ENCODE measurements at regions of chr16 and their contacts with region 1.

Region 1: GRCh38 chr16:77359065-77359502 is 75.8 kb downstream of the ADAMTS18 start:
- DNase-seq: no peak
- ATAC-seq: no peak
- H3K4me3 ChIP-seq: no peak overlapping the region
- H3K27ac ChIP-seq: no peak overlapping the region
- H3K4me1 ChIP-seq: no peaks in the 10 kb centered on the region
- H3K27me3 ChIP-seq: peaks cover 39% of the 10 kb centered on the region
- CTCF ChIP-seq: no peak
- POLR2A ChIP-seq: no peak
- RAD21 ChIP-seq: no peak

Region 2: DNA sequence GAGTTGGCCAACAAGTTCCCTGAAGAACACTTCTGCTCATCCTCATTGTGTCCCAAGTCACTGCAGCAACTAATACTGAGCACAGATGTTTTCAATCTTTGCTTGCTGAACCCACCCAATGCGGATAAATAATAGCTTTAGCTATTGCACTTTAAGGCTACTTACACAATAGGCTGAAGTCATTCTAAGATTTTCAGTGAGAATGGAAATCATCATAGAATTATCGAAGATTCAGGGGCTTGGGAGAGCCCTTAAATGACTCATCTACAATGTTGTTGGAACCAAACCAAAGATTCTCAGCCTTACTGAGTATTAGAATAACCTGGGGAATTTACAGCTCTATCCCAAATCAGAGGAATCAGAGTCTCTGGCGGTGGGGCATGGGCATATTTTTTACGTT is 108.7 kb before region 1 on chr16:
- CTCF ChIA-PET with region 1: no interaction called
- POLR2A ChIA-PET with region 1: no interaction called
- RAD21 ChIA-PET with region 1: no interaction called
- intact Hi-C with region 1: loop called (anchors 5 kb)
- DNase-seq: no peak
- ATAC-seq: no peak
- H3K4me3 ChIP-seq: no peak overlapping the region
- H3K27ac ChIP-seq: no peak overlapping the region
- H3K4me1 ChIP-seq: no peaks in the 10 kb centered on the region
- H3K27me3 ChIP-seq: peaks cover 16% of the 10 kb centered on the region; the same call in 1 of the 2 replicates
- CTCF ChIP-seq: no peak
- POLR2A ChIP-seq: no peak
- RAD21 ChIP-seq: no peak

Region 3: DNA sequence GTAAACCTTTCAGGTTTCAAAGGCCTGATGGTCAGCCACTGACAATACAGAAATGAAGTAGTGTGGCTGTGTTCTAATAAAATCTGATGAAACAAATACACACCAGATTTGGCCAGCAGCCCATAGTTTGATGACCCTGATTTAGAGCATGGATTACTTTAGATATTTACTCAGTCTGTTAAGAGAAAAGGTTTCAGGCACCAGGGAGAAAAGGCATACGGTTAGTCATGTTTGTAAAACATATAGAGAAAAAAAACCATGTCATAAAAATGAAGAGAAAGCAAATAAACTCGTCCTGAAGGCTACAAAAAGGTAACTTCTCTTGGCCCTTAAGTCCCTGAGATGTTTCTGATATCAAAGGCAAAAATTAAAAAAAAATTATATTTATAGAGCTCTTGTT is 36.3 kb before region 1 on chr16:
- CTCF ChIA-PET with region 1: no interaction called
- POLR2A ChIA-PET with region 1: no interaction called
- RAD21 ChIA-PET with region 1: no interaction called
- intact Hi-C with region 1: no loop called
- DNase-seq: no peak
- ATAC-seq: no peak
- H3K4me3 ChIP-seq: no peak overlapping the region
- H3K27ac ChIP-seq: no peak overlapping the region
- H3K4me1 ChIP-seq: no peaks in the 10 kb centered on the region
- H3K27me3 ChIP-seq: peaks cover 67% of the 10 kb centered on the region
- CTCF ChIP-seq: no peak
- POLR2A ChIP-seq: no peak
- RAD21 ChIP-seq: no peak

Region 4: GRCh38 chr16:77387815-77388209 is 28.7 kb after region 1 on chr16:
- CTCF ChIA-PET with region 1: no interaction called
- POLR2A ChIA-PET with region 1: no interaction called
- RAD21 ChIA-PET with region 1: no interaction called
- intact Hi-C with region 1: no loop called
- DNase-seq: no peak
- ATAC-seq: no peak
- H3K4me3 ChIP-seq: no peak overlapping the region
- H3K27ac ChIP-seq: no peak overlapping the region
- H3K4me1 ChIP-seq: no peaks in the 10 kb centered on the region
- H3K27me3 ChIP-seq: no peaks in the 10 kb centered on the region; the same call in none of the 2 replicates
- CTCF ChIP-seq: no peak
- POLR2A ChIP-seq: no peak
- RAD21 ChIP-seq: no peak